ENCODE measurements at regions of chr15 and their contacts with region 1.

Region 1: DNA sequence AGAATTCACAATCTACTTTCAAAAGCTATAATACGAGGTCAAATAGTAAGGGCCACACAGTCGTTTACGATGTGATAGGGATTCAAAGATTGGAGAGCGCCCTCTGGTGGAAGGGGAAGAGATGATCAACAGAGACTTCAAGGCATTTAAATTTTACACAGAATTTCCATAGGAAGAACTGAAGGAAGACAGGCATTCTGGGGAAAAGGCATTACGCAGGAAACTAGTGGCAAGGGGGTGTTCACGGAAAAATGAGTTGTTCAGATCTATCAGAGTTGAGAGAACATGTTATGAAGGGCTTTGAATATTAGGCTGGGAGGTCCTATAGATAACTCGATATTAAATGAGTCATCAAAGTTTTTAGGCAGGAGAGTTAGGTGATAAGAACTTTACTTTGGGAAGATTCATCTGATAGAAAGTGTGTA is 128.7 kb downstream of the FRMD5 start:
- DNase-seq: peak; percentile 70
- H3K4me3 Mint-ChIP-seq: no peak overlapping the region
- H3K27ac Mint-ChIP-seq: no peak overlapping the region
- H3K4me1 Mint-ChIP-seq: peaks cover 4% of the 10 kb centered on the region
- H3K27me3 Mint-ChIP-seq: peaks cover 4% of the 10 kb centered on the region

Region 2: DNA sequence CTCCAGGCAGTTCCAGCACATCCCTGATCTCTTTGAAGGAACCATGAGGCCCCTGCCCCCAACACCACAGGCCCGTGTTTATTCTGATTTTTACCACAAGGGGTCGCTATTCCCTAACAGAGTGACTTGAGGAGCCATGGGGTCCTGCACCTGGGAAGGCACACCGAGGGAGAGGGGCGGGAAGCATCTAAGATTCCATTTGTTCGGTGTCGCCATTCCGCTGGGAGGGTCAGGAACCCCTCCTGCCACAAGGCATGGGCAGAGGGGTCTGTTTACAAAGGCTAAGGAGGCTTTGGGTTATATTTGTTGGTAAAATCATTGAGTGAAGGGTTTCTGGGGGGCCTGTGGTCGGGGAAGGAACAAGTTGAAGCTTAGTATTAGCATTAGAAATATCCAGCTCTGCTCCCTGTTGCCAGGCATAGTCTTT is 162.5 kb before region 1 on chr15:
- CTCF ChIA-PET with region 1: interaction called, 81 read pairs
- POLR2A ChIA-PET with region 1: no interaction called
- intact Hi-C with region 1: loop called (anchors 1 kb)
- DNase-seq: peak; percentile 59
- H3K4me3 Mint-ChIP-seq: no peak overlapping the region
- H3K27ac Mint-ChIP-seq: no peak overlapping the region
- H3K4me1 Mint-ChIP-seq: peaks cover 2% of the 10 kb centered on the region
- H3K27me3 Mint-ChIP-seq: no peaks in the 10 kb centered on the region

Region 3: DNA sequence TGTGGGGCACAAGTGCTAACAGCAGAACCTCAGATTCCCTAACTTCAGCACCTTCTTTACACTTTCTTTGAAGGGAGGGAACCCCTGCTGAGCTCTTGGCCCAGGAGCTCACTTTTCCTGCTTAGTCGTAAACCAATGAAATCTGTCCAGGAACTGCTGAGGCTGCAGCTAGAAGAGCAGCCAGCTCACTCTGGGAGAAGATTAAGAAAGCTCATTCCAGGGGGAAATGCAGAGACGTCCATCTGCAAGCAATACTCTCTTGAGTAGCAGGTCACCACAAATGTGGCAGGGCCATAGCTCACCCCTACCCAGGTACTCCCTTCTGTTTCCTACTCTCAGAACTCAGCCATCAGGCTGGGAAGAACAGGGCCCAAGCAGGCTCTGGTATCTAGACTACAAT is 136.2 kb before region 1 on chr15:
- CTCF ChIA-PET with region 1: interaction called, 10 read pairs
- POLR2A ChIA-PET with region 1: no interaction called
- intact Hi-C with region 1: no loop called
- DNase-seq: no peak
- H3K4me3 Mint-ChIP-seq: no peak overlapping the region
- H3K27ac Mint-ChIP-seq: no peak overlapping the region
- H3K4me1 Mint-ChIP-seq: no peaks in the 10 kb centered on the region
- H3K27me3 Mint-ChIP-seq: peaks cover 6% of the 10 kb centered on the region

Region 4: DNA sequence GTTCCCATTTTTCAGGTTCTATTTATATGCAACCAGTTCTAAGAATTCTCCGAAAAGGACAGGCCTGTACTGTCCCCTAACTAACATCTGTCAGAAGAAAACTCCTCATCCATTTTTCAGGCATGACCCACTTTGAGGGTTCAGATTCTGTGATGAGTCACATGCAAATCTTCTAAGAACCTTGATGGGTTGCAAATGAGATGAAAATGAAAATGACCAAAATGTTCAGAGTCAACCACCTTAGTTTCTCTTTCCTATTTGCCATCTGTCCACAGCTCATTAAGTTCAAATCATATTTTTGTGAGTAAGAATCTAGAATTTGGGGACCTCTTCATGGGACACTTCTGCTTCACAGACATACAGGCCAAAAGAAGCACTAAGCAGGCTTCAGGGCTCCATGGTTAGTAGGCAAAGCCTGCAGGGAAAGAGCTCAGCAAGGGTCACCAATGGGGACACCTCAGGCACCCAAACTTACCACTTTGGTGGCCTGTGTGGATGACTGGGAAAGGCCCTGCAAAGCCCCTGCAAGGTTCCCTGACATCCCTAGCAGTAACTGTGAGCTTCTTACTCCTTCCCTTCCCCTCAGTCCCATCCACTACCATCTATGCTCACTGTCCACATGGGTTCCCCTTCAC is 117.5 kb before region 1 on chr15:
- CTCF ChIA-PET with region 1: interaction called, 3 read pairs
- POLR2A ChIA-PET with region 1: no interaction called
- intact Hi-C with region 1: loop called (anchors 10 kb)
- DNase-seq: no peak
- H3K4me3 Mint-ChIP-seq: no peak overlapping the region
- H3K27ac Mint-ChIP-seq: peak overlapping the region; percentile 28
- H3K4me1 Mint-ChIP-seq: peaks cover 14% of the 10 kb centered on the region
- H3K27me3 Mint-ChIP-seq: no peaks in the 10 kb centered on the region

Region 5: DNA sequence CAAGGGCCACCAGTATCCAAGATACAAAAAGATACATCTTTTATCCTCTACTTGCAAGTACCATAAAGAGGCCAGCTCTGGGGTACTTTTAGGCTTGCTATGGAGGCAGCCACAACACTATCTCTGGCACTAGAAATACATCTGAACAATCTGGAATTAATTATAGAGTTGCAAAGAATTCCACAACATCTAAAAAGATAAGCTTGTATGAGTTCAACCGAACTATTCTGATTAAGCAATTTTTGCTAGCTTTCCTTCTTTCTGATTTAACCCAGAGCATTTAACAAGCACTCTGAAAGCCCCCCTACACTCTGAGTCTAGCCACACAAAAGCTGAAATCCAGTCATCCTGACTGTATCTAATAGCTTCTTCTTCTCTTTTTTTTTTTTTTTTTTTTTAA is 33.3 kb after region 1 on chr15:
- CTCF ChIA-PET with region 1: no interaction called
- POLR2A ChIA-PET with region 1: no interaction called
- intact Hi-C with region 1: no loop called
- DNase-seq: no peak
- H3K4me3 Mint-ChIP-seq: no peak overlapping the region
- H3K27ac Mint-ChIP-seq: no peak overlapping the region
- H3K4me1 Mint-ChIP-seq: no peaks in the 10 kb centered on the region
- H3K27me3 Mint-ChIP-seq: peaks cover 8% of the 10 kb centered on the region